ENCODE measurements at regions of chr7 and their contacts with region 1.

Region 1: GRCh38 chr7:77731716-77732115 is 35.5 kb downstream of the RSBN1L start:
- DNase-seq: no peak
- ATAC-seq: no peak
- H3K4me3 ChIP-seq: no peak overlapping the region
- H3K27ac ChIP-seq: no peak overlapping the region
- H3K4me1 ChIP-seq: peaks cover 9 to 69% (median 41%) of the 10 kb centered on the region in 12 donors
- H3K27me3 ChIP-seq: no peaks in the 10 kb centered on the region
- CTCF ChIP-seq: no peak
- POLR2A ChIP-seq: no peak

Region 2: DNA sequence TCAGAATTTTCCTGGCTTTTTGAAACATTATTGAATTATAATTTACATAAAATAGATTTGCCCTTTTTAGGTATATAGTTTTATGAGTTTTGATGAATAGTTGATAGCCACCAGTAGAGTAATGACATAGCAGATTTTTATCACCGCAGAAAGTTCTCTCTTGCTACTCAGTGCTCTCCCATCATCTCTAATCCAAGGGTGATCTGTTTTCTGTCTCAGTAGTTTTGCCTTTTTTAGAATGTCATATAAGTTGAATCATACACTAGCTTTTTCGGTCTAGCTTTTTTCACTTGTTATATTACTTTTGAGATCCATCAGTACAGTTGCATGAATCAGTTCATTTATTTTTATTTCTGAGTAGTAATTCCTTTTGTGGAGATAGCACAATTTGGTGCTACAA is 17.5 kb before region 1 on chr7:
- intact Hi-C with region 1: loop called in 1 of 10 experiments (anchors 2 kb)
- DNase-seq: no peak
- ATAC-seq: no peak
- H3K4me3 ChIP-seq: no peak overlapping the region
- H3K27ac ChIP-seq: no peak overlapping the region
- H3K4me1 ChIP-seq: peaks cover 0 to 26% (median 2%) of the 10 kb centered on the region in 12 donors
- H3K27me3 ChIP-seq: no peaks in the 10 kb centered on the region
- CTCF ChIP-seq: no peak
- POLR2A ChIP-seq: no peak

Region 3: DNA sequence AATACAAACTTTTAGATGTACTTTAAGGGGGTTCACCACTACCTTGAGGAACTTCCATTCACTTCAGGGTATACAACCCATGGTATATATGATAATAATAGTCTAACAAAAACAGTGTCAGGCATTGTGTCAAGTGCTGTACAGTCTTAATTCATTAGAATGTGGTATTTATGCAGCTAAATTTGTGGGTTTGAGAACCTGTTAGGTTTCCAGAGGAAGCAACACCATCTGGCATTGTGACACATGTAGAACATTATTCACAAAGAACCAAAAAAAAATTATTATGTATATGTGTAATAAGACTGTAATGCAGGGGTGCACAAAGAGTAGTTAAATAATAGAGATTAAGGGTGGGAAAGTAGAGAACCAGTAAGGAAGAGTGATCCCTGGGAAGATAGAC is 40.2 kb after region 1 on chr7:
- intact Hi-C with region 1: no loop called
- DNase-seq: no peak
- ATAC-seq: no peak
- H3K4me3 ChIP-seq: no peak overlapping the region
- H3K27ac ChIP-seq: no peak overlapping the region
- H3K4me1 ChIP-seq: no peaks in the 10 kb centered on the region
- H3K27me3 ChIP-seq: no peaks in the 10 kb centered on the region
- CTCF ChIP-seq: no peak
- POLR2A ChIP-seq: no peak